ENCODE measurements at regions of chrX and their contacts with region 1.

Region 1: DNA sequence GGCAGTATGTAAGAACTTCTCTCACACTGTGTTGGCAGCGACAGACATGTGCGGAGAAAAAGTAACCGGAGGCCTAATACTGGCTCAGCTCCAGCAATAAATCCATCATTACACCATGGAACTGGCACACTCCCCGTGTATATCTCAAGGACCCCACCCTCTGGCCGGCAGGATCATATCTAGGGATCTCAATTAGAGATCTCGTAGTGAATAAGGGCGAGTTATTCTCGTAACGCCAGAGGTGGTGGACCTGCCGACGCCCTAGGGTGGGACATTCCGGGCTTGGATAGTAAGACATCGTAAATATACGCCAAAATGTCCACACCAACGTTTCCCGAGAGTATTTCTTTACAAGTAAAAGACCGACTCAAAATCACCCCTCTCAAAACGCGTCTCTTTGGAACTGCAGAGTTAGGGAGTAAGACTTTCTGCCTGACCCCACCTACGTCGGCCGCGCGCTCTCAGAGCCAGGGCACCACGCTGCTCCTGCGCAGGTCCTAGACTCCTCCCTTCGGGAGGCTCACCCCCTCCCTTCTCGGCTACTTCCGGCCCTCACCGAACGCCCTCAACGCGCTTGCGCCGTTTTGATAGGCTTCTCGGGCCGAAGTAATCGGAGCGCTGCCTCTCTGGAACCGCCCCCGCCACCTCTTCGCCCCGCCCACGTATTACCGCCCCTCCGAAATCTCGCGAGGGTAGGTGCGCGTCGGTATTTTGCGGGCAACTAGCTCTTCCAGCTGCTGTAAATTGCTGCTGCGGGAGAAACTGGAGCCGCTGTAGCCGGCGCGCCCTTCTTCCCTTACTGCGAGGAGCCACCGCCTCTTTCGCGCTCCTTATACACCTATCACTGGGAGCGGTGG is at the start of gene WDR44:
- DNase-seq: peak; percentile 97
- H3K4me3 Mint-ChIP-seq: peak within 1 kb of the TSS; percentile 99
- H3K27ac Mint-ChIP-seq: peak within 1 kb of the TSS; percentile 96
- H3K4me1 Mint-ChIP-seq: peaks cover 32% of the 10 kb centered on the region
- H3K27me3 Mint-ChIP-seq: no peaks in the 10 kb centered on the region
- total RNA-seq, gene WDR44: 10.3 and 11.0 TPM in 2 replicates

Region 2: GRCh38 chrX:118392716-118393115 is 47.1 kb after region 1 on chrX:
- intact Hi-C with region 1: loop called (anchors 5 kb)
- DNase-seq: no peak
- H3K4me3 Mint-ChIP-seq: no peak overlapping the region
- H3K27ac Mint-ChIP-seq: peak overlapping the region; percentile 58
- H3K4me1 Mint-ChIP-seq: peaks cover 5% of the 10 kb centered on the region
- H3K27me3 Mint-ChIP-seq: no peaks in the 10 kb centered on the region

Region 3: DNA sequence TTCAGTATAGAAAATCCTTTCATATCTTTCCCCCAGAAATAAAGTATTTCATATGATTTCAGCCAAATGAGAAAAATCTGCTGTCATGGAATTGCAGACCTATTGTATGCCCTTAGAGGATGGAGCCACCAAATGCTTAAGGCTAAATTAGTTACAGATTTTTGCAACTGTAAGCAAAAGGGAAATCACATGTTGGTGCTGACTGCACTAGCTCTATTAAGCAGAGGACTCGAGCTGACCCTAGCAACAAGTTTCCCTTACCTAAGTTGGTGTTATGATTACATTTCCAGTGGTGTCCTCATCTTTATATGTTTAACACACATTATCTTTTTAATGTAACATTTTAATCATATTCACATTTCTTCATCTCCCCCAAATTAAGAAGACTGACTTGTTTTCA is 91.7 kb after region 1 on chrX:
- intact Hi-C with region 1: no loop called
- DNase-seq: no peak
- H3K4me3 Mint-ChIP-seq: no peak overlapping the region
- H3K27ac Mint-ChIP-seq: no peak overlapping the region
- H3K4me1 Mint-ChIP-seq: no peaks in the 10 kb centered on the region
- H3K27me3 Mint-ChIP-seq: no peaks in the 10 kb centered on the region

Region 4: DNA sequence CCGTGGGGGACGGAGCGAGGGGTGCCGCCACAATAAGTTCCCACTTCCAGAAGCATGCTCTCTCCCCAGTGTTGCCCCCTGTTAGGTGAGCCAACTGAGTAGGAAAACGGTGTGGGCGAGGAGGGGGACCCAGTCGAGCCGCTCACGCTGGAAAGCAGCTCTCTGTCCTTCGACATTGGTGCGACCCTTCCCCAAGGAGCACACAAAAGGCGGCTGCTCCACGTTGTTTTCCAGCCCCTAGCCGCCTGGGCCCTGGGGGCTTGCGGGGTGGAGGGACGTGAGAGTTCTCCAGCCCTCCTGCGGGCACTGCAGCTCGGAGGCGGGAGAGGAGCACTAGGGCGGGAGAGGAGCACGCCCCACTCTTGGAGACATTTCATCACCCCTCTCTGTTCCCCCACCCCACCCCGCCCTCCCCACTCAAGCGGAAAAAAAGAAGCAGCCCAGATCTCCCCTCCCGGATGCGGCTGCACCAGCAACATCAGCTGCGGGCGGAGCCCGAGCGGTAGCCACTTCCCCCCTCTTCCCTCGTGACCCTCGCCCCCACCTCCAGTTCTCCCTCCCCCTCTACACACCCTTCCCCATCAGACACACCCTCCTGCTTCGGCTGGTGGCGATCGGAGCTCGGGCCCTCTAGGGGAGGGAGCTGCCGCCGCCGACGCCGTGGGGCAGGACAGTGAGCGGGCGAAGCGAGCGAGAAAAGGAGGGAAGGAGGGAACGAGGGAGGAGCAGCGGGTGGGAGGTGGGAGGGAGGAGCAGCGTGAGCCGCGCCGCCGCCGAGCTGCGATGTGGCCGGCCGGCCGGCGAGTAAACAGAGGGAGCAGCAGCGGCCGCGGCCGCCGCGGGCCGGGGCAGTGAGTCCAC is 149.7 kb after region 1 on chrX and contains the start of gene DOCK11:
- intact Hi-C with region 1: loop called (anchors 1 kb)
- DNase-seq: peak; percentile 93
- H3K4me3 Mint-ChIP-seq: peak within 1 kb of the TSS; percentile 99
- H3K27ac Mint-ChIP-seq: peak within 1 kb of the TSS; percentile 98
- H3K4me1 Mint-ChIP-seq: peaks cover 18% of the 10 kb centered on the region
- H3K27me3 Mint-ChIP-seq: no peaks in the 10 kb centered on the region
- total RNA-seq, gene DOCK11: 27.8 and 28.6 TPM in 2 replicates

Region 5: GRCh38 chrX:118528071-118528737 is 182.6 kb after region 1 on chrX:
- intact Hi-C with region 1: loop called (anchors 2 kb)
- DNase-seq: peak; percentile 87
- H3K4me3 Mint-ChIP-seq: peak overlapping the region; percentile 92
- H3K27ac Mint-ChIP-seq: peak overlapping the region; percentile 99
- H3K4me1 Mint-ChIP-seq: peaks cover 50% of the 10 kb centered on the region
- H3K27me3 Mint-ChIP-seq: no peaks in the 10 kb centered on the region

Region 6: DNA sequence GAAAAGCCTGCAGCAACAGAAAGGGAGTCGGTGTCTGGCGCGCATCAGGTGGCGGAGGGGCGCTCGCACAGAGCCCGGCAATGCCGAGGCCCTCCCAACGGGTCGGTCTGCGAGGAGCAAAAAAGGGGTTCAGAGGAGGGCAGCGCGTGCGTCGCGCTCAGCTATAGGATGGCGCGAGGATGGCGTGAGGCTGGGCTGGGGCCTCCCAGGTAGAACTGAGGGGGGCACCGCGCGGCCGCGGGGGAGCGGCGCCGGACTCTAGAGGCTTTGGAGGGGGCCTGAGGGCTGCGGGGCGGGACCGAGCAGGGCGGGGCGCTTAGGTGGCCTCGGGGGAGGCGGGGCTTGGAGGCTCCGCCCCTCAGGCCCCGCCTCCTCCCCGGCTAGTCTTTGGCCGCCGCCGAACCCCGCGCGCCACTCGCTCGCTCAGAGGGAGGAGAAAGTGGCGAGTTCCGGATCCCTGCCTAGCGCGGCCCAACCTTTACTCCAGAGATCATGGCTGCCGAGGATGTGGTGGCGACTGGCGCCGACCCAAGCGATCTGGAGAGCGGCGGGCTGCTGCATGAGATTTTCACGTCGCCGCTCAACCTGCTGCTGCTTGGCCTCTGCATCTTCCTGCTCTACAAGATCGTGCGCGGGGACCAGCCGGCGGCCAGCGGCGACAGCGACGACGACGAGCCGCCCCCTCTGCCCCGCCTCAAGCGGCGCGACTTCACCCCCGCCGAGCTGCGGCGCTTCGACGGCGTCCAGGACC is 890.4 kb after region 1 on chrX and contains the start of gene PGRMC1:
- intact Hi-C with region 1: loop called (anchors 2 kb)
- DNase-seq: peak; percentile 94
- H3K4me3 Mint-ChIP-seq: peak within 1 kb of the TSS; percentile 93
- H3K27ac Mint-ChIP-seq: peak within 1 kb of the TSS; percentile 76
- H3K4me1 Mint-ChIP-seq: peaks cover 18% of the 10 kb centered on the region
- H3K27me3 Mint-ChIP-seq: peaks cover 28% of the 10 kb centered on the region
- total RNA-seq, gene PGRMC1: 45.5 TPM in 2 replicates

Region 7: DNA sequence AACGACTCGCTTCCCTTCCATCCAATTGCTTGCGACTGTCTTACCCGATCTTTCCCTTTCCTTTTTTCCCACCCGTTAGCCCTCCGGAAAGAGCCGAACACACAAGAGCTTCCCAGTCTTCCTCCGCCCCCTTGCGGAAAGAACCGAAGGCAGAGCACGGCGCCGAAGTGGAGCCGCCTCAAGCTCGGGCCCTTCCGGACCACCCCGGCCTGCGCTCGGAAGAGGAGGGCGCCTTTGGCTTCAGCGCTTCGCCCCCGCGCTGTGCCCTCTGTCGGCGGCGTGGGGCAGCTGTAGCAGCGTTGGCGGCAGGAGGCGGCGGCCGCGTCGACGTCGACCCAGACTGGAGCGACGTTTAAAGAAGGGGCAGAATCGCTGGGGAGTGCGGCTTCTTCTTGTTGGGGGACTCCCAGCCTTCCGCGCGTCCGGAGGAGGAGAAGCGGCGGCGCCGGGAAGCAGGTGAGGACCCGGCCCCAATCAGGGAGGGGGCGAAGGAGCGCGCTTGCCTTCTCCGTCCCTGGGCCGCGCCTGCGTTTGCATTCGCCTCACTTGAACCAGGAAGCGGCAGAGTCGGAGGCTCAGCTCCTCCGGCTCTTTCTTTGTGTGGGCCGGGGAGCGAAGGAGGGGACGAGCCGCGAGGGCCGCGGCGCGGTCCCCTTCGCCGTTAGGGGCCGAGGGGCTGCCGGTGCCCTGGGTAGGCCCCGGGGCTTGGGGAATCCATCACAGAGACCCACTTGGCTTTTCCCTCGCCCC is 1905.1 kb after region 1 on chrX and contains the start of gene ZBTB33:
- intact Hi-C with region 1: loop called (anchors 10 kb)
- DNase-seq: peak; percentile 95
- H3K4me3 Mint-ChIP-seq: peak within 1 kb of the TSS; percentile 88
- H3K27ac Mint-ChIP-seq: peak within 1 kb of the TSS; percentile 95
- H3K4me1 Mint-ChIP-seq: peaks cover 9% of the 10 kb centered on the region
- H3K27me3 Mint-ChIP-seq: no peaks in the 10 kb centered on the region
- total RNA-seq, gene ZBTB33: 14.4 and 14.6 TPM in 2 replicates